ENCODE measurements at regions of chr6 and their contacts with region 1.

Region 1: DNA sequence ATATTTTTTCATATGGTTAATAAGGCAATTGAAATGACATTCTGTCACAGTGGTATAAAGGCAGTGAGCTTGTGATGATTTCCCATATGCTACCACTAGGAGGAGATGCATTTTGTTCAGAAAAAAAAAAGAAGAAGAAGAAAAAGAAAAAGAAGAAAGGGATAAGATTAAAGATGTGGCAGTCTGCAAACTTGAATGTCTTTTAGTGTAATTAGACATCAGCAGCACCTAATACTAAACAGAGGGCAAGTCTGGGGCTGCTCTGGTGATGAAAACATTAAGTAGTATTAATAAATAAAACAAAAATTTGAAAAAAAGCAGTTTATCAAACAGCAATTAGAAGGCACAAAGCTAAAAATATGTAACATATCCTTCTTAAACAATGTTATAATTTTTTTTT is 95.4 kb upstream of the DEFB112 start:
- DNase-seq: no peak
- H3K4me3 ChIP-seq: no peak overlapping the region
- H3K27ac ChIP-seq: no peak overlapping the region
- H3K4me1 ChIP-seq: peaks cover 10% of the 10 kb centered on the region
- H3K27me3 ChIP-seq: no peaks in the 10 kb centered on the region
- CTCF ChIP-seq: peak; percentile 59 to 67

Region 2: GRCh38 chr6:49462927-49463611 is 682.1 kb before region 1 on chr6 and contains the starts of genes CENPQ and MMUT:
- CTCF ChIA-PET with region 1: interaction called, 11 read pairs
- dilution Hi-C with region 1: no loop called
- in situ Hi-C with region 1: no loop called
- intact Hi-C with region 1: no loop called
- DNase-seq: peak; percentile 94
- H3K4me3 ChIP-seq: peak within 1 kb of the TSS; percentile 59 to 87 (median 78)
- H3K27ac ChIP-seq: peak within 1 kb of the TSS; percentile 94
- H3K4me1 ChIP-seq: no peaks in the 10 kb centered on the region
- H3K27me3 ChIP-seq: no peaks in the 10 kb centered on the region
- CTCF ChIP-seq: no peak
- total RNA-seq, gene CENPQ: 2.8 to 6.6 TPM
- total RNA-seq, gene MMUT: 8.8 to 15.8 TPM

Region 3: DNA sequence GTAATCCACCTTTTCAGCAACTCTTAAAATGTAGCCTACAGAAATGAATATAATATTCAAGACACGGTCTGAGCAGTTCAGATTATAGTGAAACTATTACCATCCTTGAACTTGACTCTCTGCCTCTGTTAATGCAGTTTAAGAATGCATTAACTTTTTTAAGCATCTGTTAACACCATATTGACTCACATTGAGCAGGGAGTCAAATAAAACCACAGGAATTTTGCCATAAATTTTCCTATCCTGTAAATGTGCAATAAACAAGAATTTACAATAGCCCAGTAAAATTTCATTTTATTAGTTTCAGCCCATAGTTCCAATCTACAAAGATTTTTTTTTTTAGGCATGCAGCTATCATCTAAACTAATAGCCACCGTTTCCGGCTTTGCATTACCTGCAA is 143.8 kb after region 1 on chr6:
- CTCF ChIA-PET with region 1: no interaction called
- dilution Hi-C with region 1: no loop called
- in situ Hi-C with region 1: no loop called
- intact Hi-C with region 1: no loop called
- DNase-seq: no peak
- H3K4me3 ChIP-seq: no peak overlapping the region
- H3K27ac ChIP-seq: no peak overlapping the region
- H3K4me1 ChIP-seq: no peaks in the 10 kb centered on the region
- H3K27me3 ChIP-seq: no peaks in the 10 kb centered on the region
- CTCF ChIP-seq: no peak